ENCODE measurements at regions of chr13 and their contacts with region 1.

Region 1: GRCh38 chr13:95050800-95051615 is 250.2 kb downstream of the ABCC4 start:
- DNase-seq: peak; percentile 41
- H3K4me3 Mint-ChIP-seq: no peak overlapping the region
- H3K27ac Mint-ChIP-seq: peak overlapping the region; percentile 56
- H3K4me1 Mint-ChIP-seq: peaks cover 19% of the 10 kb centered on the region
- H3K27me3 Mint-ChIP-seq: no peaks in the 10 kb centered on the region

Region 2: GRCh38 chr13:94595950-94596574 is 454.9 kb before region 1 on chr13 and contains the start of gene TGDS:
- CTCF ChIA-PET with region 1: no interaction called
- POLR2A ChIA-PET with region 1: no interaction called
- intact Hi-C with region 1: no loop called
- DNase-seq: peak; percentile 94
- H3K4me3 Mint-ChIP-seq: peak within 1 kb of the TSS; percentile 93
- H3K27ac Mint-ChIP-seq: peak within 1 kb of the TSS; percentile 93
- H3K4me1 Mint-ChIP-seq: peaks cover 36% of the 10 kb centered on the region
- H3K27me3 Mint-ChIP-seq: no peaks in the 10 kb centered on the region
- total RNA-seq, gene TGDS: 19.0 to 19.6 TPM

Region 3: GRCh38 chr13:94667190-94667589 is 383.8 kb before region 1 on chr13:
- CTCF ChIA-PET with region 1: no interaction called
- POLR2A ChIA-PET with region 1: no interaction called
- intact Hi-C with region 1: loop called (anchors 5 kb)
- DNase-seq: peak; percentile 23
- H3K4me3 Mint-ChIP-seq: no peak overlapping the region
- H3K27ac Mint-ChIP-seq: peak overlapping the region; percentile 64
- H3K4me1 Mint-ChIP-seq: peaks cover 25% of the 10 kb centered on the region
- H3K27me3 Mint-ChIP-seq: peaks cover 17% of the 10 kb centered on the region

Region 4: DNA sequence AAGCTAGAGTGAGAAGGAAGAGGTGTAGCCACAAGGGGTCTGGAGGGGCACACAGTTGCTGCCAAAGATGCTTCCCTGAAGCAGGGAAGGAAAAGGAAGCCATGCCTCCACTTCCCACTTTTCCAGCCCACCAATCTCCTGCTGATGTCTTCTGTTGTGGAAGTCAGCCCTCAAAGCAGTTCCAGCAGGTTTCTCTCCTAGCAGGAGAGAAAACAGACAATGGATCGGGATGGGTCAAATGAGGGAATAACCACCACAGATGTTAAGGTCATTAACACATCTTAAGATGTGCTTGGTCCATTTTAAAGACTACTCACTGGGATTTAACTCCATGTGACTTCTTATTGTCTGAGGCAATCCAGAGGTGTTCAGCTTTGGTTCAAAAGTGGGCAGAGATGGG is 54.6 kb before region 1 on chr13:
- CTCF ChIA-PET with region 1: no interaction called
- POLR2A ChIA-PET with region 1: no interaction called
- intact Hi-C with region 1: loop called (anchors 2 kb)
- DNase-seq: no peak
- H3K4me3 Mint-ChIP-seq: no peak overlapping the region
- H3K27ac Mint-ChIP-seq: no peak overlapping the region
- H3K4me1 Mint-ChIP-seq: no peaks in the 10 kb centered on the region
- H3K27me3 Mint-ChIP-seq: peaks cover 15% of the 10 kb centered on the region

Region 5: DNA sequence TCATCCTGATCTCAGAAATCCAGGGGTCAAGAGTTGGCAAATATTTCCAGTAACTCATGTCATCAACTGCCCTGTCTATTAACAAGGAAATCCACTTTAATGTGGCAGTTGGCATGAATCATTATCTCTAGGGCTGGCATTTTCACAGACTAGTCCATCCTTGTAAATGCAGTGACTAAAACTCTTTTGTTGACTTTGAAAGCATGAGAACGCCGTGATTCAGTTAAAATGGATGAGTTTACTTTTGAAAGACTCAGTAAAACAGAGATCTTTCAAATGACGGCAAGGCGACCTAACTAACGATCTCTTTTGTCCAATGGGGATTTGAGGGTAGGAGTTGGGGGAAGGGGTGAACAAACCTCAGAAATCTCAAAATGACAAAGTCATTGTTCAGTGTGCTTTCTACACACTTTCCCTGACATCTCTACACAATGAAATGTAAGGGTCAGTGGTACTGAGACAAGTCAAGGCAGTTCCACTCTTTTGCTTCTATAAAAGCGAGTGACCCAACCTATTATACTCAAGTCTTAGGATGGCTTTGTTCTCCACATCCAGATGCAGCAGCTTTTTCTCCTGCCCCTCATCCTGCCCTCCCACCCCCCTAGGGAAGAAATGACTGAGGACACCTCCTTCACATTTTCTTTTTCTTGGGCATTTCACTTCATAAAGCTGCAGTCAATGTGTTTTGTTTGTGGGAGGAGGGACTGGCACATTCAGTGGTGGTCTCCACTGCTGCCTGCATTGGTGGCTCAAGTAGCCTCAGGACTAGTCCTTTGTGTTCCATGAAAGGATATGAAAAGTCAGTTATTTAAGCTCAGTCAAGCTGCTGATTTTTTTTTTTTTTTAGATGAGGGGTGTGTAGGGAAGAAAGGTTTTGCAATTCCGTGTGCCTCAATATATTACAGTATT is 49.8 kb after region 1 on chr13:
- CTCF ChIA-PET with region 1: no interaction called
- POLR2A ChIA-PET with region 1: no interaction called
- intact Hi-C with region 1: loop called (anchors 1 kb)
- DNase-seq: no peak
- H3K4me3 Mint-ChIP-seq: no peak overlapping the region
- H3K27ac Mint-ChIP-seq: peak overlapping the region; percentile 18
- H3K4me1 Mint-ChIP-seq: peaks cover 9% of the 10 kb centered on the region
- H3K27me3 Mint-ChIP-seq: no peaks in the 10 kb centered on the region

Region 6: DNA sequence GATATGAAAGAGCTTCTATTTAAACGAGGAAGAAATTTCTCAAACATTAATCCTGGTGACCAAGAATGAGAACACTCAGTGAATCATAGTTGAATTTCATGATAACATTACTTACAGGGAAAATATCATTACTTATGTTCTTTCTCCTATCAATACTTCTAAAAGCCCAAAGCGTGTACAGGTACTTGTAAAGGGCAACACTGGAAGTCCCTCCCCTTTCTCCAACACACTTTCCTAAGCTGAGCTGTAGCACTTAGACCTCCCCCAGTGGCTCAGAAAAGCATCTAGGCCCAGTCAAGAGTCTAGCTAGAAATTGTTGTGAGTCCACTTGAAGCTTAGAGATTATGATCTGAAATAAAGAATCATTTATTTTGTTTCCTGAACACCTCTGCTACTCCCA is 99.5 kb after region 1 on chr13:
- CTCF ChIA-PET with region 1: interaction called, 3 read pairs
- POLR2A ChIA-PET with region 1: no interaction called
- intact Hi-C with region 1: loop called (anchors 1 kb)
- DNase-seq: no peak
- H3K4me3 Mint-ChIP-seq: no peak overlapping the region
- H3K27ac Mint-ChIP-seq: no peak overlapping the region
- H3K4me1 Mint-ChIP-seq: peaks cover 12% of the 10 kb centered on the region
- H3K27me3 Mint-ChIP-seq: no peaks in the 10 kb centered on the region

Region 7: DNA sequence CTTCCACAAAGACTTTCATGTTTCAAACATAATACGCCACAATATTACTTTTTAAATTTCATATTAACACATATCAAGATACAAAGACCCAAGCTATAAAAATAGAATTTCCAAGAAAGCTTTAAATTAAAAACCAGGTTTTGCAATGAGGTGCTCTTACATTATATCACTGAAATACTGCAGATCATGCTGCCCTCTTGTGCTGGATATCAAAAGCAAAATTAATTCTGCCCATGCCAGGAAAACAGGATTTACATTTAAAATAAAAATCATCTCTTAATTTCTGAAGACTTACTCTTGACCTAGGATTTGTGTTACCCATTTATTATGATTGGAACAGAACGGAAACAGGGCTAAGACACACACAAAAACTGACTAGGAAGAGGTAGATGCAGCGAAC is 105.2 kb after region 1 on chr13:
- CTCF ChIA-PET with region 1: interaction called, 3 read pairs
- POLR2A ChIA-PET with region 1: no interaction called
- intact Hi-C with region 1: loop called (anchors 1 kb)
- DNase-seq: no peak
- H3K4me3 Mint-ChIP-seq: no peak overlapping the region
- H3K27ac Mint-ChIP-seq: no peak overlapping the region
- H3K4me1 Mint-ChIP-seq: peaks cover 4% of the 10 kb centered on the region
- H3K27me3 Mint-ChIP-seq: no peaks in the 10 kb centered on the region

Region 8: GRCh38 chr13:95181586-95181985 is 130.6 kb after region 1 on chr13:
- CTCF ChIA-PET with region 1: interaction called, 3 read pairs
- POLR2A ChIA-PET with region 1: no interaction called
- intact Hi-C with region 1: loop called (anchors 2 kb)
- DNase-seq: no peak
- H3K4me3 Mint-ChIP-seq: no peak overlapping the region
- H3K27ac Mint-ChIP-seq: peak overlapping the region; percentile 57
- H3K4me1 Mint-ChIP-seq: peaks cover 64% of the 10 kb centered on the region
- H3K27me3 Mint-ChIP-seq: no peaks in the 10 kb centered on the region